ENCODE measurements at regions of chr16 and their contacts with region 1.

Region 1: GRCh38 chr16:29961479-29962343 is at the start of gene TMEM219:
- DNase-seq: peak; percentile 84 to 97
- H3K4me3 ChIP-seq: peak within 1 kb of the TSS; percentile 28
- CTCF ChIP-seq: no peak
- POLR2A ChIP-seq: no peak
- total RNA-seq, gene TMEM219: 118 to 143 (median 130) TPM

Region 2: DNA sequence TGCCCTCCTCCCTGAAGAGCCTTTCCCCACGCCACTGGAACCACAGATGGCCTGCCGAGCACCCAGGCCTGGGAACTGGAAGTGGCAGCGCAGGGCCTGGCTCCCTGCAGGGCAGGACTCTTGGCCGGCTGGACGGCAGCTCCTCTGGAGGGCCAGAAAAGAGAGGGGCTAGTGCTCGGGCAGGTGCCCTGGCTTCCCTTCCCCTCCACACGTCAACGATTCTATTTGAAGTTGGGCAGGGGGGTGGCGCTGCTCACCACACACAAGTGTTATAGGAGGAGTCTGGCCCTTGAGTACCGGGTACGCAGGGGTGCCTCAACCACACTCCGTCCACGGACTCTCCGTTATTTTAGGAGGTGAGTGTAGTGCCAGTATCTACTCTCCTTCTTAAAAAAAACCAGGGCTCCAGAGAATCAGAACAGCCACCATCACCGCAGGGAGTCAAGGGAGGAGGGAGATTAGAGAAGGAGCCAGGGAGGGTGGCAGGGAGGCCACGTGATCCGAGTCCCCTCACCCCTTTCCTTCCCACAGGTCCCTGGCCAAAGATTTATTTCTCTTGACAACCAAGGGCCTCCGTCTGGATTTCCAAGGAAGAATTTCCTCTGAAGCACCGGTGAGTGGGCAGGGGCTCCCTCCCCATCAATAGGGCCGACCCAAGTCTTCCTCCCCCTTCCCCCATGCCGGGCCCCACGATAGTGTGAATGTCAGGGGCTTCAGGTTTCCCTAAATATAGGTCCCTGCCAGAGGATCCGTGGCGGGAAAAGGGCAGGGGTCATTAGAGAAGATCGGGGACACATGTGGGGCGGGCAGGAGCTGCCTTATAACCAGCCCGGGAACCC is 102.4 kb after region 1 on chr16:
- intact Hi-C with region 1: loop called (anchors 5 kb)
- DNase-seq: peak; percentile 73 to 95
- H3K4me3 ChIP-seq: peak overlapping the region; percentile 39
- CTCF ChIP-seq: no peak
- POLR2A ChIP-seq: no peak

Measured in lower leg skin (tissue), 4 donors.